Cardiac septum (tissue), 1 donor: ENCODE measurements at regions of chr2 and their contacts with region 1.

Region 1: DNA sequence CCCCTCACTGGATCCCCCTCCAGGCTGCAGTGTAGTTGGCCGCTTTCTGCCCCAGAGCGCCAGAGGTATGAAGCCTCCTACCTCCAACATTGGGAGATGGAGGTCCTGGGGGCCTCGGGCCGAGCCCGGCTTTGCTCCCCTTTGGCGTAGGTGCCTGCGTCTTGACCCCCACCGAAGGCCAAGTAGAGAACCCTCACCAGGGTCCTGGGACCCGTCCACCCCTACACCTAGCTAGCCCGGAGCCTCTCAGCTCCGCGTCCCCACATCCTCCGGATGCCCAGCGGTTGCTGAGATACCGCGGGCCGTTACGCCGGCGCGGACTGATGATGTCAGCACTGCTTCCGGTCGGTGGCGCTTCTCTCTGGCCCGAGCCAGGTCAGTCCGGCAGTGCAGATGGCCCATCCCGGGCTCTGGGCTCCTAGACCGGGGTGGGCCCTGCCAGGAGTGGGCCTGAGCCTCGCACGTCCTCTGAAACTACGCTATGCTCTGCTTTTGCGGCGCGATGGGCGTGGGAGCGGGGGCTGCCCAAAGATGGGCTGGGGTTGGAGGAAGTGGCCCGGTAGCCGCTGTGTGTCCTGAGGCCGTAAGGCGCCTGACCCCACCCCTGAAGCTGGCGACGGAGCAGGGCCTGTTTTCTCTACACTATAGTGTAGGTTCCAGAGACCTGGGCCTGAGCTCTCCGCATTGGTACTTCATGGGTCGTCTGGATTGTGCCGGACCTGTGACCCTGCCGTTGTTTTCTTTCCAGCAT is at the starts of genes GLB1L and STK16:
- DNase-seq: peak; percentile 98
- total RNA-seq, gene GLB1L: 2.0 TPM
- total RNA-seq, gene STK16: 16.3 TPM

Region 2: GRCh38 chr2:219206442-219207253 is 38.7 kb before region 1 on chr2 and contains the start of gene ZFAND2B:
- intact Hi-C with region 1: loop called (anchors 1 kb)
- DNase-seq: peak; percentile 98
- total RNA-seq, gene ZFAND2B: 23.9 TPM

Region 3: GRCh38 chr2:219229305-219230058 is 15.8 kb before region 1 on chr2 and contains the starts of genes ANKZF1 and ATG9A:
- intact Hi-C with region 1: loop called (anchors 2 kb)
- DNase-seq: peak; percentile 100
- total RNA-seq, gene ANKZF1: 22.4 TPM
- total RNA-seq, gene ATG9A: 66.3 TPM